ENCODE measurements at regions of chr22 and their contacts with region 1.

Region 1: DNA sequence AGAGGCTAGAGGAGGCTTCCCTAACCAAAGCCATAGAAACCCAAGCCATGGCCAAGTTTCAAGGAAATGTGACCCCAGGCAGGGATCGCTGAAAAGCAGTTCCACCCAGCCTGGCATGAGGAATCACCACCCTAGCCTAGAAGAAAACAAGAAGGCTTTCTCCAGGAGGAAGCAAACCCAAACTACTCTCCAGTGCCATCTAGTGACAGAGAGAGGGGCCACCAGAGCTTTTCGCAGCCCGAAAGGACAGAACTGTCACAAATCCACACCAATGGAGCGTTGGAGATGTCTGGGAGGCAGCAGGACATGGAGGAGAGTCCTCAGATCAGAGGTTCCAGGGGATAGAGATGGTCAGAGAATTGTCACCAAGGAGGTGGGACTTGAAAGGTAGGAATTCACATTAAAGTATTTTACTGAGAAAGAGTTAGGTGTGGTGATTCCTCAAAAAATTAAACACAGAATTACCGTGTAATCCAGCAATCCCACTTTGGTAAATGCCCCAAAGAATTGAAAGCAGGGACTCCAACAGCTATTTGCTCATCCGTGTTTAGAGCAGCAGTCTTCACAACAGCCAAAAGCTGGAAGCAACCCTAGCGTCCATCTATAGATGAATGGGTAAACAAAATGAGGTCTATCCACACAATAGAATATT is 67.3 kb upstream of the NUP50 start:
- H3K4me3 Mint-ChIP-seq: no peak overlapping the region
- H3K27ac Mint-ChIP-seq: no peak overlapping the region
- H3K4me1 Mint-ChIP-seq: peaks cover 28% of the 10 kb centered on the region
- H3K27me3 Mint-ChIP-seq: peaks cover 38% of the 10 kb centered on the region

Region 2: DNA sequence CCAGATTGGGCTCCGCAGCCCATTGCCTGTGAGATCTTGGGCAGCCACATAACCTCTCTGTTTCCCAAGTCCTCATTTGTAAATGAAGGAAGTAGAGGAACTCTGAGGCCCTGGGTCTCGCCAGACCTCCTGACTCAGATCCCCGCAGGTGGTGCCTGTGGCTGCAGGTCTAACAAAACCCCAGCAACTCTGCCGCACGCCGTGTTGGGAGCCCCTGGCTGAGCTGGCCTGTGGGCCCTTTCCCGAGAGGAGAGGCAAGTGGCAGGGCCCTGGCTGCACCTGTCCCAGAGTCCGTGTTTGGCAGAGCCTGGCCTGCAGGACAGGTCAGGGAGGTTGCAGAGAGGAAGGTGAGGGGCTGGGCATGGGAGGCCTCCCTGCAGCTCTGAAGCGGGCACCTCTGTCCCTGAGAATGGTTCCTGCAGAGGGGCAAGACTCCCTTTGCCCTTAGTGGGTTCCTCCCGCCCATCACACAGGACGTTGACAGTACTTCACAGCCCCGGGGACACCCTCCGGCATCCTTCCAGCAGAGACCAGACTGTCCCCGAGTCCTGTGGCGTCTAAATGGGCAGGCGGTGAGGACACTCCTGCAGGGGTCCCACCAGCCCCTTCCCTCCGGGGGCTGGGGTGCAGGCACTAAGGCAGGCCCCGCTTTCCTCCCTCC is 276.3 kb before region 1 on chr22:
- intact Hi-C with region 1: loop called (anchors 1 kb)
- H3K4me3 Mint-ChIP-seq: no peak overlapping the region
- H3K27ac Mint-ChIP-seq: no peak overlapping the region
- H3K4me1 Mint-ChIP-seq: no peaks in the 10 kb centered on the region
- H3K27me3 Mint-ChIP-seq: no peaks in the 10 kb centered on the region

Region 3: GRCh38 chr22:44975427-44976262 is 120.7 kb before region 1 on chr22:
- intact Hi-C with region 1: loop called (anchors 5 kb)
- H3K4me3 Mint-ChIP-seq: no peak overlapping the region
- H3K27ac Mint-ChIP-seq: no peak overlapping the region
- H3K4me1 Mint-ChIP-seq: no peaks in the 10 kb centered on the region
- H3K27me3 Mint-ChIP-seq: peaks cover 3% of the 10 kb centered on the region

Region 4: DNA sequence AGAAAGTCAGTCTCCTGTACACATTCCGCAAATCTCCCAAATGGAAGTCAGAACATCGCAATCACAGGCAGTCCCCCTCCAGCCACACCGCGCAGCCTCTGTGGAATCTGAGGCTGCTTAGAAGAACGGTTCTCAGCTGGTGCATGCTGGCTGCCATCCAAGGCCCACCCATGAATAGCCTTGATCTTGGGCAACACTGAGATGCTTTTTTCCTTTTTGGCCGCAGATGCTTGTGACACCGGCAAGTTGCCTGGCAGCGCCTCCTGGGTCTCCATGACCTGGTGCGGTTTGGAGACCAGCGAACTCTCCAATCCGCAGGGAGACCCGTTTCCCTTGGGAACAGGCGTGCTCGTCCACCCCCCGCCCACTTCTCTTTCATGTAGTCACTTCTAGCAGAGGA is 60.2 kb before region 1 on chr22:
- intact Hi-C with region 1: no loop called
- H3K4me3 Mint-ChIP-seq: no peak overlapping the region
- H3K27ac Mint-ChIP-seq: no peak overlapping the region
- H3K4me1 Mint-ChIP-seq: no peaks in the 10 kb centered on the region
- H3K27me3 Mint-ChIP-seq: no peaks in the 10 kb centered on the region

Region 5: DNA sequence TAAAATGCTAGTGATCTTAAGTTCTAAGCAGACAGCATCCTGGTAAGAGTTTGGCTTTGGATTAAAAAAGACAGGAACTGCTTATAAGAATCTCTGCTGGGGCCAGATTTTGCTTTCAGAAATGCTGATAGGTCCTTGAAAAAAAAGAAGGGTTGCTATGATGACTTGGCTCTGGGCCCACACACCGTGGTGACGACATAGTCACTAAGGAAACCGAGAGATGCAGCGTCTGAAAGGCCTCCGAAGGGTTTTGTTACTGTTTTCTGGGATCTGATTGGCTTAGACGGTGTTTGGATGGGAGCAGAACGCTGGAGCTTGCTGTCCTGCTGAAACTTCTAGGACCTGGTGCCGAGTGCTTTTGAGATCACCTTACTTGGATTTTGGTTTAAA is 221.8 kb after region 1 on chr22:
- intact Hi-C with region 1: no loop called
- H3K4me3 Mint-ChIP-seq: peak overlapping the region; percentile 4
- H3K27ac Mint-ChIP-seq: peak overlapping the region; percentile 85
- H3K4me1 Mint-ChIP-seq: peaks cover 63% of the 10 kb centered on the region
- H3K27me3 Mint-ChIP-seq: no peaks in the 10 kb centered on the region